PC-9 (cell line): ENCODE measurements at regions of chr11 and their contacts with region 1.

Region 1: DNA sequence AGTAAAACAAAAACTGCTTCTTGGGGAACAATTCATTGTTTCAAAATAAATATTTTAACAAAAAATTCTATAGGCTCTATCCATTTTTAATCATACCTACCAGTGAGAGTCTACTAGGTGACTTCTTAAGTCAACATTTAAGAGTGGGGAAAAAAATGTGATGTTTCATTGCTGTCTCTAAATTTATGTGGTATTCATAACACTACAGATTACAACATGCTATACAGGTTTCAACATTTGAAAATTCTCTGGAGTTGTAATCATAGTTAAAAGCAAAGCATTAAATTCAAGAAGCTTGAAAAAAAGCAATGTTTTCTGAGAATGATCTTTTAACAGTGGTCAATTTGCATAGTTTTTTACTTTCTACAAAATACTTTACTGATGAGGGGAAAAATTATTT is 18.3 kb downstream of the SBF2 start:
- DNase-seq: no peak
- H3K4me3 ChIP-seq: no peak overlapping the region
- H3K27ac ChIP-seq: no peak overlapping the region
- H3K4me1 ChIP-seq: no peaks in the 10 kb centered on the region
- H3K27me3 ChIP-seq: no peaks in the 10 kb centered on the region
- CTCF ChIP-seq: no peak

Region 2: GRCh38 chr11:10058356-10058755 is 217.4 kb before region 1 on chr11:
- CTCF ChIA-PET with region 1: no interaction called
- POLR2A ChIA-PET with region 1: no interaction called
- intact Hi-C with region 1: no loop called
- DNase-seq: no peak
- H3K4me3 ChIP-seq: no peak overlapping the region
- H3K27ac ChIP-seq: no peak overlapping the region
- H3K4me1 ChIP-seq: no peaks in the 10 kb centered on the region
- H3K27me3 ChIP-seq: no peaks in the 10 kb centered on the region
- CTCF ChIP-seq: no peak

Region 3: DNA sequence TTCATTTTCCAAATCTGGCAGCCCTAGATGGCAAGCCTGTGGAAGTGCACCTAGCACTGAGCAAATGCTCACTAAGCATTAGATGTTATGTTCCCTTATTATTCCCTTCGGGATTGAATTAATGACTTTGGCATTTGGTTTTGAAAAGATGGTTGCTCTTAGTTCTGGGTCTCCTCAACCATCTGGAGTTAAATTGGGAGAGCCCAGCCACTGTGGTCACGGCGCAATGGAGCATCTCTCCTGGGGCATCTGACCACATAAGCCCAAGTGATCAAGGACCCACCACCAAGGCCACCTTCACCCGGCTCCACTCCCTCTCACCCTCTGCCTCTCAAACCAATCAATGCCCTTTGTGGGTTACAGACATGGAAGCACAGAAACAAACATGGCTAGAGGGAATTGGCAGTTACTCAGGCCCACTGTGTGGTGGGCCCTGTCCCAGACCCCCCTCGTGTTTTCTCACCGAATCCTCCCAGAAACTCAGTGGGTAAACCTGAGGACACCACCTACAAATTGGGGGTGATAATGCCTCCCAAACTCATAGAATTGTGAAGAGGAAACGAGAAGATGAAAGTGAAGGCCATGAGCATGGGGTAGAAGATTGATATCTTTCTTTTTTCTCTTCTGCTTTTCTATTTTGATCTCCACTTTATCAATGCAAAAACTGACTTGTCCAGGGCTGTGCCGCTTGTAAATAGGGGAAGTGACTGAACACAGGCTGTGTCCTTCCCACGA is 365.6 kb after region 1 on chr11:
- CTCF ChIA-PET with region 1: no interaction called
- POLR2A ChIA-PET with region 1: no interaction called
- intact Hi-C with region 1: no loop called
- DNase-seq: no peak
- H3K4me3 ChIP-seq: no peak overlapping the region
- H3K27ac ChIP-seq: no peak overlapping the region
- H3K4me1 ChIP-seq: no peaks in the 10 kb centered on the region
- H3K27me3 ChIP-seq: no peaks in the 10 kb centered on the region
- CTCF ChIP-seq: no peak

Region 4: GRCh38 chr11:10688401-10688800 is 412.7 kb after region 1 on chr11:
- CTCF ChIA-PET with region 1: interaction called, 15 read pairs
- POLR2A ChIA-PET with region 1: no interaction called
- intact Hi-C with region 1: no loop called
- DNase-seq: peak in 1 of 2 experiments; percentile 72
- H3K4me3 ChIP-seq: no peak overlapping the region
- H3K27ac ChIP-seq: no peak overlapping the region
- H3K4me1 ChIP-seq: no peaks in the 10 kb centered on the region
- H3K27me3 ChIP-seq: no peaks in the 10 kb centered on the region
- CTCF ChIP-seq: peak; percentile 42